ENCODE measurements at regions of chr7 and their contacts with region 1.

Region 1: DNA sequence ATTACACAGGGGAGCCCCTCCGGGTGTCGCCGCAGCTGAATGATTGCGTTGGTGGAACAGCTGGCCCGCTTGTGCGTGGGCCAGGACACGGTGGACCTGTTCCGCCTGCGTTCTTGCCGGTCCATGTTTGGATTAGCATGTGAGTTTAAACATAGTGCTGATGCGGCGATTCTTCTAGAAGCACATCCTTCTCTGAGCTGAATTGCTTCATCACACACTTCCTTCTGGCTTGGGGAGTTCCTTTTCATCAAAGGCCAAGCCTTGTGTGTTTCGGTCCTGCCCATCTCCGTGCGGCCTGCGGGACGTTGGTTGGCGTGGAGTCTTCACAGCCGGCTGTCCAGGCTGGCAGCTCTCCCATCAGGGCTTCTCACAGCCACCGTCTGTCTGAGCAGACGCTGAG is 45.5 kb upstream of the SLC29A4 start:
- DNase-seq: no peak
- H3K4me3 Mint-ChIP-seq: no peak overlapping the region
- H3K27ac Mint-ChIP-seq: no peak overlapping the region
- H3K4me1 Mint-ChIP-seq: peaks cover 10% of the 10 kb centered on the region
- H3K27me3 Mint-ChIP-seq: peaks cover 21% of the 10 kb centered on the region

Region 2: DNA sequence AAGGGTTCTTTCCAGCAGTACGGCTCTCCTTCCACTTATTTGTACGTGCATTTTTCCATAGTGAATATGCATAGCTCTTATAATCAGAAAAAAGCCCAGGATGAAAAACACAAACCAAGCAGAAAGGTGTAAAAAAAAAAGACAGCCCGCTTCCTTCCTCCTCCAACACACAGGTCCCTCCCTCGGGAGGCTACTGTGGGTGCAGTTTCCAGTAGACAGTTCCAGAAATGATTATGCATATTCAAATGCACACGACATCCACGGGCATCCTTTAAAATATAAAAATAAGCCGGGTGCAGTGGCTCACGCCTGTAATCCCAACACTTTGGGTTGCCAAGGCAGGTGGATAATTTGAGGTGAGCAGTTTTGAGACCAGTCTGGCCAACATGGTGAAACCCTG is 126.4 kb after region 1 on chr7:
- CTCF ChIA-PET with region 1: interaction called, 15 read pairs
- POLR2A ChIA-PET with region 1: no interaction called
- intact Hi-C with region 1: no loop called
- DNase-seq: peak; percentile 60
- H3K4me3 Mint-ChIP-seq: no peak overlapping the region
- H3K27ac Mint-ChIP-seq: peak overlapping the region; percentile 28
- H3K4me1 Mint-ChIP-seq: peaks cover 10% of the 10 kb centered on the region
- H3K27me3 Mint-ChIP-seq: no peaks in the 10 kb centered on the region

Region 3: DNA sequence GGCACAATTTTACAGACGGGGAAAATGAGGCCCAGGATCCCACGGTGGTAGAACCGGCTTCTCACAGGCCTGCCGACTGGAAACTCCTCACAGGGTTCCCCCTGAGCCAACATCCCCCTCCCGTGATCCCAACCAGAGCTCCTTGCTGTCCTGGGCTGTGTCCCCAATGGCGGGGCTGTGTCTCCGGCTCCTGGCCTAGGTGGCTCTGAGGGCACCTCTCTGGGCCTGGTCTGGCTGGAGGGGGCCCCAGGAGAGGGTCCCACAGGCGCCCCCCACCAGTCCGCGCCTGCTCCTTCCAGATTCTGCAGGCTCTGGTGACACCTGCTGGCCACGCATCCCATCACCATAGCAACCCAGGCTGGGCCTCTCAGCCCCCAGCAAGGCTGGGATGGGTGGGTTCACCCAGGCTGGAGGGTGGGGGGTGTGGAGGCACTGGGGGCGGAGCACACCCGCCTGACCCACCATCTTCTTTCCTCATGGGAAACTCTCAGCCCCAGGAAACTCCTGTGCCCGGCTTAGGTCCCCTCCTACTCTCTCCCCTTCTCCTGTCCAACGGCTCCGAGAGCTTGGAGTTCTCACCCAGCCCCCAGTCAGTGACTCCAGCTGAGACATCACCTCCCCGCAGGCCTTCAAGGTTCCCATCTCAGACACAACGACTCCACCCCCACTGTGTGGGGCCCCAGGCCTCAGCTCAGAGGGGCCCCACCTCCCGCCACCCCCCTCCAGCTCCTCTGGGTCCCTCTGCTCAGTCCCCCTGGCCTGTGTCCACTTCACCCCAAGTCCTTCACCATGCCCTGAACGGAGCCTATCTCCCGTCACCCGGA is 213.5 kb after region 1 on chr7:
- CTCF ChIA-PET with region 1: interaction called, 16 read pairs
- POLR2A ChIA-PET with region 1: no interaction called
- intact Hi-C with region 1: no loop called
- DNase-seq: peak; percentile 47
- H3K4me3 Mint-ChIP-seq: no peak overlapping the region
- H3K27ac Mint-ChIP-seq: no peak overlapping the region
- H3K4me1 Mint-ChIP-seq: no peaks in the 10 kb centered on the region
- H3K27me3 Mint-ChIP-seq: peaks cover 1% of the 10 kb centered on the region